ENCODE measurements at regions of chr2 and their contacts with region 1.

Region 1: GRCh38 chr2:18425210-18425703 is 135.2 kb downstream of the RDH14 start:
- DNase-seq: no peak
- H3K4me3 ChIP-seq: no peak overlapping the region
- H3K27ac ChIP-seq: no peak overlapping the region
- H3K4me1 ChIP-seq: no peaks in the 10 kb centered on the region
- H3K27me3 ChIP-seq: no peaks in the 10 kb centered on the region
- CTCF ChIP-seq: no peak

Region 2: DNA sequence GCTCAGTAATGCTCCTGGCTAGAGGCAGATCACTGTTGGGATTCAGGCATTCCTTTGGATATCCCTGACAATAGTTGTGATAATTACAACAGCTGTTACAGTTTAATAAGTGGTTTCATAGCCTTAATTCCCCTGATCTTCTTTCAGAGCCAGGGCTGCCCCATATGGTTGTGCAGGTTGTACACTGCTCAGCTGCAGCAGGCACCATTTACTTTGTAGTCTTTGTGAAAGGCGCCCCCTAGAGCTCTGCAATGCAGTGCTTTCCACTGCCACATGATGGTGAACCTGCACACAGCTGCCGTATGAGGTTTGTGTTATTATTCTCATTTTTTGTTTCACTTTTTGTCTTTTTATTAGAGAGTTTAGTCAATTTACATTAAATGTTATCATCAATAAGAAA is 307.7 kb before region 1 on chr2:
- CTCF ChIA-PET with region 1: no interaction called
- dilution Hi-C with region 1: no loop called
- in situ Hi-C with region 1: no loop called
- intact Hi-C with region 1: no loop called
- DNase-seq: peak; percentile 43
- H3K4me3 ChIP-seq: no peak overlapping the region
- H3K27ac ChIP-seq: no peak overlapping the region
- H3K4me1 ChIP-seq: no peaks in the 10 kb centered on the region
- H3K27me3 ChIP-seq: no peaks in the 10 kb centered on the region
- CTCF ChIP-seq: peak; percentile 81 to 93

Region 3: GRCh38 chr2:18284331-18284730 is 140.9 kb before region 1 on chr2:
- CTCF ChIA-PET with region 1: no interaction called
- dilution Hi-C with region 1: no loop called
- in situ Hi-C with region 1: no loop called
- intact Hi-C with region 1: no loop called
- DNase-seq: peak; percentile 81
- H3K4me3 ChIP-seq: no peak overlapping the region
- H3K27ac ChIP-seq: peak overlapping the region; percentile 25
- H3K4me1 ChIP-seq: peaks cover 12% of the 10 kb centered on the region
- H3K27me3 ChIP-seq: no peaks in the 10 kb centered on the region
- CTCF ChIP-seq: no peak

Region 4: DNA sequence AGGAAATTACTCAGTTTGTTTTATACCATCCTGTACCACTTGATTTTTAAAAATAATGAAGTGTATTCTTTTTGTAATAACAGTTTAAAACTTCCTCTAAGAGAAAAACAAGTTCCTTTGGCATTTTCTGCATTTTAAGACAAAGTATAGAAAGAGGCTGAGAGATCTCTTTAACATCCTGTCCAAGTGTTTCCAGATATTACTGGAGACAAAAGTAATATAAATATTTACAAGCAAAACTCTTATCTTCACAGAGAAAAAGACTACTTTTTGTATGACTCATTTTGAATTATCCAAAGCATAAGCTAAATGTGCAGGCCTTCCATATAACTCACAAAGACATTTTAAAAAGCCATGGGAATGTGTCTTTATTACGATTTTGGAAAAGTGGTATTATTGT is 85.9 kb before region 1 on chr2:
- CTCF ChIA-PET with region 1: no interaction called
- dilution Hi-C with region 1: no loop called
- in situ Hi-C with region 1: no loop called
- intact Hi-C with region 1: no loop called
- DNase-seq: no peak
- H3K4me3 ChIP-seq: no peak overlapping the region
- H3K27ac ChIP-seq: no peak overlapping the region
- H3K4me1 ChIP-seq: peaks cover 10% of the 10 kb centered on the region
- H3K27me3 ChIP-seq: no peaks in the 10 kb centered on the region
- CTCF ChIP-seq: no peak

Region 5: DNA sequence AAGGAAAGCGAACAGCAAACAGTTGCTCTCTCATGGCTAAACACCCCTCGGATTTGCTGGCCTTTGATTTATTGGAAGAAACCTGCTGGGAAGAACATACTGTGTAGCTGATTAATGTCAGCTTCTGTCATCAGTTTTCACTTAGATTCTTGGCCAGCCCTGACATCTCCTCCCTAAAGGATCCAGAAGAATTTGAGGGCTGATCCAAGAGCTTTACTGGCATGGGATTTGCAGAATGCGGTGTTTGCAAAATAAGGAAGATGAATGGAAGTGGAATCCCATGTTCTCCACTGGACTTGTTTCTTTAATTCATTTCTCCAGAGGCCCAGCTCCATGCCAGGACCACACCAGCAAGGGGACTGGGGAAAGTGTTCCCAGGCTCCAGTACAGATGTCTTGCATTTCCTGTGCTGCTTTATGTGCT is 54.7 kb after region 1 on chr2:
- CTCF ChIA-PET with region 1: no interaction called
- dilution Hi-C with region 1: loop called (anchors 10 kb)
- in situ Hi-C with region 1: no loop called
- intact Hi-C with region 1: no loop called
- DNase-seq: no peak
- H3K4me3 ChIP-seq: no peak overlapping the region
- H3K27ac ChIP-seq: no peak overlapping the region
- H3K4me1 ChIP-seq: no peaks in the 10 kb centered on the region
- H3K27me3 ChIP-seq: no peaks in the 10 kb centered on the region
- CTCF ChIP-seq: no peak

Region 6: DNA sequence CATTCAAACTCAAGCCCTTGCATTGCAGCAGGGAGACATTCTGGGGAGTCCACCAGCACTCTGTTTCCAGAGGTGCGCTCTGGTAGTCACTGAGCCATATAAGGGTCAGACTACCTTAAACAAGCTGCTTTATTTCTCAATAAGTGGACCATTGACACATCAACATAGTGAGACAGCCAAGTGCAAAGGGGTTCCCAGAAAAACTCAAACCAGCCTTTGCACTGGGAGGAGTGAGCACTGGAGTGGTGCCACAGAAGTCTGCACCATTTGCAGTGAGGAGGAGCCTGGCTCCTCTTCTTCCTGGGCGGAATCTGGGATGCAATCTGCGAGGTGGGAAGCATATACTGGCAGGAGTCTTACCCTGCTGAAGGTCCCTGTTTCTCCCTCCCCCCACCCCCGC is 846.8 kb after region 1 on chr2:
- CTCF ChIA-PET with region 1: no interaction called
- dilution Hi-C with region 1: no loop called
- in situ Hi-C with region 1: no loop called
- intact Hi-C with region 1: no loop called
- DNase-seq: no peak
- H3K4me3 ChIP-seq: no peak overlapping the region
- H3K27ac ChIP-seq: no peak overlapping the region
- H3K4me1 ChIP-seq: no peaks in the 10 kb centered on the region
- H3K27me3 ChIP-seq: no peaks in the 10 kb centered on the region
- CTCF ChIP-seq: no peak